Breast epithelium (tissue), 4 donors: ENCODE measurements at regions of chrX and their contacts with region 1.

Region 1: DNA sequence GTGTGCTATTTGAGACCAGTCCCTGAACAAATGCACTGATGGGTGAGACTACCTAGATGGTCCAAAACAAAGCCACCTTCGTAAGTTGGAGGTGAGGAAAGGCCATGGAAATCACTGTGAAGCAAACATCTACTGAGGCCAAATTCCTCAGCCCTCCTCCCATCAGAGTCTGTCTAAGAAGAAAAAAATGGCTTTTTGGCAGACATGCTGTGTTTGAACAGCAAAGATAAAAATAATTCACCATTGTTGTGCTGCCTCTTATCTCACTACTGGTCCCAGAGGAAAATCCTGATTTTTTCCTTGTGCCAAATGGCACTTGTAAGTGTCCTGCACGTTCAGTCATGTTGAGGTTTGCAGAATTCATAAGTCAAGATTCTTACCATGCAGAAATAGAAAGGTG is 7.9 kb downstream of the MAGEB18 start:
- DNase-seq: no peak
- H3K4me3 ChIP-seq: no peak overlapping the region
- H3K27ac ChIP-seq: no peak overlapping the region
- H3K4me1 ChIP-seq: no peaks in the 10 kb centered on the region
- H3K27me3 ChIP-seq: no peaks in the 10 kb centered on the region
- CTCF ChIP-seq: no peak
- POLR2A ChIP-seq: no peak

Region 2: GRCh38 chrX:26050099-26050498 is 95.9 kb before region 1 on chrX:
- intact Hi-C with region 1: no loop called
- DNase-seq: no peak
- H3K4me3 ChIP-seq: no peak overlapping the region
- H3K27ac ChIP-seq: no peak overlapping the region
- H3K4me1 ChIP-seq: no peaks in the 10 kb centered on the region
- H3K27me3 ChIP-seq: peaks cover 0 to 4% of the 10 kb centered on the region in 2 donors
- CTCF ChIP-seq: no peak
- POLR2A ChIP-seq: no peak

Region 3: GRCh38 chrX:26083093-26083492 is 62.9 kb before region 1 on chrX:
- intact Hi-C with region 1: no loop called
- DNase-seq: no peak
- H3K4me3 ChIP-seq: no peak overlapping the region
- H3K27ac ChIP-seq: no peak overlapping the region
- H3K4me1 ChIP-seq: no peaks in the 10 kb centered on the region
- H3K27me3 ChIP-seq: no peaks in the 10 kb centered on the region
- CTCF ChIP-seq: no peak
- POLR2A ChIP-seq: no peak

Region 4: DNA sequence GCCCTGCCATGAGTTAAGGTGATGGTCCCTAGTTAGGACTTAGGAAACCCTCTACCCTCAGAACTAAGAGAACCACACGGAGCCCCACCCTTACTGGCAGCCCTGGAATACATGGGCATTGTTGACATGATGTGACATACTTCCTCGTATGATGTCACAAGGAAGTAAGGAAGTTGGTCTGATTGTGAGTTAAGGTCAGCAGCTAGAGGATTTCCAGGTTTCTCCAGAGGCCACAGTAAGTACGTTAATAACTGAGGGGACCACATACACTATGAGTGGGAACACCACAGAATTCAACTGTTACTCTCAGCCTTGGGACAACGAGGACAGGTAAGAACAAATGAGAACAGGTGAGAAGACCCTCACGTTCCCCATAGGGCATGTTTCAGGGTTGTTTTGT is 69.8 kb after region 1 on chrX and contains the start of gene MAGEB5:
- intact Hi-C with region 1: loop called (anchors 2 kb)
- DNase-seq: no peak
- H3K4me3 ChIP-seq: no peak within 1 kb of the TSS
- H3K27ac ChIP-seq: no peak within 1 kb of the TSS
- H3K4me1 ChIP-seq: no peaks in the 10 kb centered on the region
- H3K27me3 ChIP-seq: peaks cover 0 to 14% of the 10 kb centered on the region in 2 donors
- CTCF ChIP-seq: no peak
- POLR2A ChIP-seq: no peak
- total RNA-seq, gene MAGEB5: not detected

Region 5: GRCh38 chrX:27241981-27242380 is 1096.0 kb after region 1 on chrX:
- intact Hi-C with region 1: loop called (anchors 5 kb)
- DNase-seq: no peak
- H3K4me3 ChIP-seq: no peak overlapping the region
- H3K27ac ChIP-seq: no peak overlapping the region
- H3K4me1 ChIP-seq: no peaks in the 10 kb centered on the region
- H3K27me3 ChIP-seq: no peaks in the 10 kb centered on the region
- CTCF ChIP-seq: no peak
- POLR2A ChIP-seq: no peak